ENCODE measurements at regions of chr5 and their contacts with region 1.

Region 1: DNA sequence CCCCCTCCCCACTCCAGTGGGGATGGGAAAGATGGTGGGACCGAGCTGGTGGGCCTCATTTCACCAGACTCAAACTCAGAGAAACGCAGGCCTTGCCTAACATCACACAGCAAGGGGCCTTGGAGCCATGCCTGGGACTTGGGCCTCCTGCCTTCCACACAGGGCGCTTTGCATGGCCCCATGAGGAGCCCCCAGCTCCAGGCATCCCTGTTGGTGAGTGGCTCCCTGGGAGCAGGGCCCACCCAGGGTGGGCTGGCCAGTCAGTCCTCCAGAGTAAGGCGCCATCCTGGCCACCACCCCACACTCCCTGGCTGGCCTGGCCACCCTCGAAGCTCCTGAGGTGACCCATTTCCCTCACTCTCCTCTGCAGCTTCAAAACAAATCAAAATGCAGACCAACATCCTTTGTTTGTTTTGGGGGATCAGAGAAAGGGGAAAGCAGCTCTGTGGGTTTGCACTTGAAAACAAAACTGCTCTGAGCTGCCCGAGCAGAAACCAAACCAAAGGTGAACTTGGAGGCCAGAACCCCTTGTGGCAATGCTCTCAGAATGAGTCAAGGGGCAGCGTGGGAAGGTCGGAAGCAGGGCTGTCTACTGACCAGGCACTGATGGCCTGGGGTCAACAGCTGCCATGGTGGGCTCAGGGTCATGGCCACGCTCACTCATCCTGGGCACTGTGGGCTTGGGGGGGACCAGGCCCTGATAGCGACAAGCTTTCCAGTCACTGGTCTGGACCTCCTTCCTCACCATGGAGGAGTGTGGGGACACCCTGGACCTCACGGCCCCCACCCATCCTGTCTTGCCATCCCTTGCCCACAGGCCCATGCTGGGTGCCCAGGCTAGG is 37.0 kb upstream of the VDAC1 start:
- DNase-seq: no peak
- H3K4me3 ChIP-seq: no peak overlapping the region
- H3K27ac ChIP-seq: no peak overlapping the region
- H3K4me1 ChIP-seq: no peaks in the 10 kb centered on the region
- H3K27me3 ChIP-seq: no peaks in the 10 kb centered on the region
- CTCF ChIP-seq: no peak
- EP300 ChIP-seq: no peak
- POLR2A ChIP-seq: no peak

Region 2: DNA sequence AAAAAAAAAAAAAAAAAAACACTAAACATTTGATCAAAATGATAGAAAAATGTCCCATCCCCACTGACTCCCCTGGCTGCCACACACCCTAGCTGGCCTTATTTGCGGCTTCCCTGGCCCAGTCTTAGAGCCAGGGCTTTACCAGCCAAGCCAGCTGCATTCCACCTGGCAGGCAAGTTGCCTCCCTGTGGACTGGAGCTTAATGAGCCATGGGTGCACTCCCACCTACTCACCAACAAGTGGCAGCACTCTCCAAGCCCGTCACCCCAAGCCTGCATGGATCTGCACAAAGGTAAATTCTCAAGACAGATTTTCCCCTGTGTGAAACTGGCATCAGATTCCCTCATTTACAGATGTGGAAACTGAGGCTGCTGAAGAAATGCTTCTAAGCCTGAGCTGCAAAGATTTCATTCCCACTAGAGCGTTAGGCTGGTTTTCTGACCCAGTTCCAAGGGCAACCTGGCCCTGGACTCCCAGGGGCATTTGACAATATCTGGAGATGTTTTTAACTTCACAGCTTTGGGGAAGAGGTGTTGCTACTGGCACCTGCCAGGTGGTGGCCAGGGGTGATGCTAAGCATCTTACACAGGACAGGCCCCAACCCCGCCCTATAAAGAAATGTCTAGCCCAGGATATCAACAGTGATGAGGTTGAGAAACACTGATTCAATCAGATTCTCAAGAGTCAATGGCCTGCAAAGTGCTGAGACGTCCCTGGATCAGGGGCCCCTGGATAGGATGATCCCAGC is 15.1 kb before region 1 on chr5:
- in situ Hi-C with region 1: no loop called
- intact Hi-C with region 1: no loop called
- DNase-seq: peak; percentile 75
- H3K4me3 ChIP-seq: no peak overlapping the region
- H3K27ac ChIP-seq: no peak overlapping the region
- H3K4me1 ChIP-seq: peaks cover 0 to 21% (median 6%) of the 10 kb centered on the region in 4 donors
- H3K27me3 ChIP-seq: no peaks in the 10 kb centered on the region
- CTCF ChIP-seq: peak; percentile 28 to 73 (median 52)
- EP300 ChIP-seq: no peak
- POLR2A ChIP-seq: no peak

Region 3: GRCh38 chr5:134140530-134141201 is 98.9 kb after region 1 on chr5:
- in situ Hi-C with region 1: loop called (anchors 5 to 10 kb)
- intact Hi-C with region 1: loop called (anchors 5 kb)
- DNase-seq: peak; percentile 81
- H3K4me3 ChIP-seq: no peak overlapping the region
- H3K27ac ChIP-seq: no peak overlapping the region
- H3K4me1 ChIP-seq: peaks cover 0 to 6% (median 3%) of the 10 kb centered on the region in 4 donors
- H3K27me3 ChIP-seq: no peaks in the 10 kb centered on the region
- CTCF ChIP-seq: peak; percentile 67 to 79 (median 76)
- EP300 ChIP-seq: no peak
- POLR2A ChIP-seq: no peak

Region 4: DNA sequence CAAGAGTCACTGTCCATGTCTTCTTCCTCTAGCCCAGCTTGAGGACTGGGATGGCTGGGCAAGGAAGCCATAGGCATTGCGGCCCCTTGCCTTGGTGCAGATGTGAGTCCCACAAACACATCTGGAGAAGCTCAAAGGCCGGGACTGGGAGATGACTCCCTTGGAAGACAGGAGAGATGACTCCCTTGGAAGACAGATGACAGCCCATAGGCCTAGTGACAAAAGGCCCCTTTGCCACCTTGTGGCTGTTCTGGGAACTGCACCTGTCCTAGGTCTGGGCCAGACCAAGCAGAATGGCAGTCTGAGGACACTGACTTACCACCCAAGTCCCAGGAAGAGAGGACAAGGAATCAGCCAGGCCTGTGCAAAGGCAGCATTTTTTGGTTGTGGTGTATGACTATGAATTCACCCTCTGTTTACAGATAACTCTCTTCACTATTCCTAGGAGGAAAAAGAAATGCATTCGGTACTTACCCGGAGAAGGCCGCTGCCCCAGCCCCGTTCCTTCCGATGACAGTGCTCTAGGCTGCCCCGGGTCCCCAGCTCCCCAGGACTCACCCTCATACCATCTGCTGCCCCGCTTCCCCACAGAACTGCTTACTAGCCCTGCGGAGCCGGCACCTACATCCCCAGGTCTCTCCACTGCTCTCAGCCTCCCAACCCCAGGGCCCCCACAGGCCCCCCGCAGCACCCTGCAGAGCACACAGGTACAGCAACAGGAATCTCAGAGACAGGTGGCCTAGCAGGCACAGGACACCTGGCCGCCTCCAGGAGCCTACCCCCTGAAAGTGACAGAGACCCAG is 104.2 kb after region 1 on chr5:
- in situ Hi-C with region 1: loop called (anchors 5 to 10 kb)
- intact Hi-C with region 1: loop called (anchors 5 kb)
- DNase-seq: peak; percentile 84
- H3K4me3 ChIP-seq: no peak overlapping the region
- H3K27ac ChIP-seq: no peak overlapping the region
- H3K4me1 ChIP-seq: peaks cover 0 to 8% (median 0%) of the 10 kb centered on the region in 4 donors
- H3K27me3 ChIP-seq: no peaks in the 10 kb centered on the region
- CTCF ChIP-seq: peak; percentile 89 to 97 (median 94)
- EP300 ChIP-seq: no peak
- POLR2A ChIP-seq: no peak

Region 5: DNA sequence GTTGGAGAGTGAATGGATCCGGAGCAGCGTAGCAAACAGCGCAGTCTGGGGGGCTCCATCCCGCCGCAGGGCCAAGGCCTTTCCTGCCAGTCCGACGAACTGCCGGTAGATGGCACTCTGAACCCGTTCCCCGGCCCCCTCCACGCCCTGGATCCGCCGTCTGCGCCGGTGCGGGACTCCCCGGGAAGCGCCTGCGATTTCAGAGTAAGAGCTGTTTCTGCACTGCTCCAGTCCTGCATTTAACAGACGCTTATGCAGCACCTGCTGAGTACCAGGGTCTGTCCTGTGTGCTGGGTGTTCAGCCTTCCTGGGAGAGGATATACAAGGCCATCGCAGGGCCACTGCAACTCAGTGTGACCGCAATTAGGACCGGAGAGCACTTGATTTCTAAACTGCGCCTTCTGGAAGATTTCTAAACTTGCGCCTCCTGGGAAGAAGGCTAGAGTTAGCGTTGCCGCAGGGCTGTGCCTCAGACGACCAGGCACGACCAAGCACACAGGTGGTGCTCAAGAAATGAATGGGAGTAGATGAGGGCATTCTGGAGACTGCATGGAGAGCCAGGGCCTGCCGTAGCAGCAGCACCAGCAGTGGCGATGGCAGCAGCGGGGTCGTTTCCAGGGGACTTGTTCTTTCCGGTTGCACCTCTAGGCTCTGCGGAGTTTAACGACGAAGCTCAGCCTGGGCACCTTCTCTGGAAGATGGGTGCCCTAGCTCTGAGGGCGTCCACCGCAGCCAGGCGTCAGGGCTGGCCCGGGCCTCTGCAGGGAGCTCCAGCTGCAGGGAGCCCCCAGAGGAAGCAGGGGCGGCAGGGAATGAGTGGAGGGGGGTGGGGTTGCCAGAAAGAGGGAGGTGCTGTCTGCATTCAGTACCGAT is 1424.6 kb after region 1 on chr5:
- in situ Hi-C with region 1: no loop called
- intact Hi-C with region 1: no loop called
- DNase-seq: peak; percentile 73
- H3K4me3 ChIP-seq: peak overlapping the region in 1 of 4 donors; percentile 27
- H3K27ac ChIP-seq: no peak overlapping the region
- H3K4me1 ChIP-seq: peaks cover 0 to 9% (median 2%) of the 10 kb centered on the region in 4 donors
- H3K27me3 ChIP-seq: peaks cover 69% of the 10 kb centered on the region
- CTCF ChIP-seq: peak; percentile 60 to 83 (median 79)
- EP300 ChIP-seq: no peak
- POLR2A ChIP-seq: no peak